ENCODE measurements at regions of chr10 and their contacts with region 1.

Region 1: DNA sequence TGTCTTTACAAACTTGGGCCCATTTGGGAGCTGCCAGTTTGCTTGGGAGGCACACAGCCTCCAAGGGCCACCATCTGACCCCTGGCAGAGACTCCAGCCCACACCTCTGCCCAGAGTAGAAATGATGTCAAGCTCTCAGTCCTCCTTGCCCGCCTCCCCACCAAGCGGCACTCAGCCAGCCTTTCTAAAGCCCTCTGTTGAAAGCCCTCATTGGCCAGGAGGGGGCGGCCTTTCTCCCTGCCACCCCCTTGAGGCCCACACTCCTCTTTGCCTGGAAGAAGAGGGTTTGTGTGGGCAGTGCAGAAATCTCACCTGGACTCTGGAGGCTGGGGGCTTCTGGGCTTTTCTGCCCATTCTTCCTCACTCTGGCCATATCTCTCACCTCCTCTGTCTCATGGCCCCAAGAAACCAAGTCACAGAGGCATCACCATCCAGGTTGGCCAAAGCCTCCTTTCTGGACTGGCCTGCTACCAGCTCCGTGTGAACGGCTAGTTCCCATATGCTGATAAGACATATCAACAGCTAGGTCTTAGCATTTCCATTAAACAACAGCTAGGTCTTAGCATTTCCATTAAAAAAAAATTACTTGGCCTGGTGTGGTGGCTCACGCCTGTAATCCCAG is 36.1 kb downstream of the UBTD1 start:
- DNase-seq: peak; percentile 46
- ATAC-seq: peak; percentile 65
- H3K4me3 Mint-ChIP-seq: no peak overlapping the region
- H3K27ac Mint-ChIP-seq: no peak overlapping the region
- H3K4me1 Mint-ChIP-seq: no peaks in the 10 kb centered on the region
- H3K27me3 Mint-ChIP-seq: no peaks in the 10 kb centered on the region

Region 2: DNA sequence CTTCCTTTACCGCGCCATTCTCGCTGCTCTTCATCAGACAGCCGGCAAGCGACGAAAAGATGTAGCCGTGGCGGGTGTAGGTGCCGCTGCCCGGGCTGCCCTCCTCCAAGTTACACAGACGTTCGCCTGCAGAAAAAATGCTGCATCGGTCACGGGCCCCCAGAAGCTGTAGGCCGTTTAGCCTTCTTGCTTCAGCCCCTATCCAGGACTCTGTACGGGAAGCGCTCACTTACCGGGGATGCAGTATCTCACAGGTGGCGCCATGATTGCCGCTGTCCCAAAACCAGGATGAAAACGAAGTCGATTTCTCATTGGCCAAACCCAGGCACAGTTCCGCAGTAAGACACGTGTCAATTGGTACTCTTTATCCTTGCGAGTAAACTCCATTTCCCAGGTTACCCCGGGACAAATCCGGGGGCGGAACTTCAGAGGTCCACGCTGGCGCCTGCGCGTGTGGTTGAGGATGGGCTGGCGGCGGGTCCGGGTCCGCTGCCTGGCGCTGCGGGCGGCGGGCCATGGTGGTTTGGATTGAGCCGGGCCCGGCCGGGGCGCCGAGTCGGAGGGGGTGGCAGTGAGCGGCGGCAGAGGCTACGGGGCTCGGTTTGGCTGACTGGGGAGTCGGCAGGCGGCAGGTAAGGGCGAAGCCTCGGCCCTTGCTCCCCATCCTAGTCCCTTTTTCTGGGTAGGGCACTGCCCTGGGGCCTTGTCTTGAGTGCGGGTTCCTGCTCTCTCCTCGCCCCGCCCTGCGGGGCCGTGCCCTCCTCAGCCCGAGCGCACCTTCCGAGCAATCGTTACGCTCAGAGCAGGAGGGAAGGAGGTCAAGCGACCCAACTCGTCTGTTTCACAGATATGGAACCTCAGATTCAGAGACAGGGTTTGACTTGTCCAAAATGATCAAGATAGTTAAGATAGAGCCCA is 88.9 kb before region 1 on chr10 and contains the starts of genes EXOSC1 and ZDHHC16:
- CTCF ChIA-PET with region 1: no interaction called
- POLR2A ChIA-PET with region 1: no interaction called
- DNase-seq: peak; percentile 94
- ATAC-seq: peak; percentile 98
- H3K4me3 Mint-ChIP-seq: peak within 1 kb of the TSS; percentile 98
- H3K27ac Mint-ChIP-seq: peak within 1 kb of the TSS; percentile 92
- H3K4me1 Mint-ChIP-seq: peaks cover 40% of the 10 kb centered on the region
- H3K27me3 Mint-ChIP-seq: no peaks in the 10 kb centered on the region
- total RNA-seq, gene EXOSC1: 47.1 to 48.2 TPM
- total RNA-seq, gene ZDHHC16: 35.8 to 36.2 TPM

Region 3: DNA sequence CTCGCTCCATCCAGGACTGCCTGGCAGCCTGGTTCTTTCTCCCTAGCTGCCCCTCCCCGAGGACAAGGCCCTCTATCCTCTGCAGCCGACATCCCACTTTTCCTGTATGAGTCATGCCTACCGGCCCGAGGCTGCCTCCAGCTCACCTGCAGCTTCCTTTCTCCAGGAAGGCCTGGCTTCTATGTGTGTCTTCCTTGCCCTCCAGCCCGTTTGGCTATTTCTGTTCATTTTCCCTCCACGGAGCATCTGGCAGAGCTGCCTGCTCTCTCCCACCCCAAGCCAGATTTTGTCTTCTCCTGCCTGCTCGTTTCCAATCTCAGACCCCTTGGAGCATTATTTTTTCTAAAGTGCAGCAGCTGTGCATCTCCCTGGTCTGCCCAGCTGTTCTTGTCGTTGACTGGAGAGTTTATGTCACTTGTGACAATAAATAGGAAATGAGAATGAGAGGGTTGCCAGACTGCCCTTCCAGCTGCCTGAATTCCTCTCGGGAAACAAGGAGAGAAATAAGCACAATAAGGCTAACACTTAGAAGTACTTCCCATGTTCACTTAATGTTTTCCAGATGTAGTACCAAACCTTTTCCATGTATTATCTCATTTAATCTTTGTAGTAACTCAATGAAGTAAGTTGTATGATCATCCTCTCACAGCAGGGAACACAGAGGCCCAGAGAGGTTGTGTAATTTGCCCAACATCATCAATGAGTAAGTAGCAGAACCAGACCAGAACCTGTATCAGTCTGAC is 16.4 kb before region 1 on chr10:
- CTCF ChIA-PET with region 1: interaction called, 17 read pairs
- POLR2A ChIA-PET with region 1: no interaction called
- DNase-seq: no peak
- ATAC-seq: no peak
- H3K4me3 Mint-ChIP-seq: no peak overlapping the region
- H3K27ac Mint-ChIP-seq: no peak overlapping the region
- H3K4me1 Mint-ChIP-seq: no peaks in the 10 kb centered on the region
- H3K27me3 Mint-ChIP-seq: peaks cover 19% of the 10 kb centered on the region

Region 4: GRCh38 chr10:97546456-97547270 is 11.8 kb after region 1 on chr10:
- CTCF ChIA-PET with region 1: interaction called, 12 read pairs
- POLR2A ChIA-PET with region 1: interaction called, 4 read pairs
- DNase-seq: no peak
- ATAC-seq: no peak
- H3K4me3 Mint-ChIP-seq: no peak overlapping the region
- H3K27ac Mint-ChIP-seq: no peak overlapping the region
- H3K4me1 Mint-ChIP-seq: peaks cover 13% of the 10 kb centered on the region
- H3K27me3 Mint-ChIP-seq: no peaks in the 10 kb centered on the region

Measured in activated CD8-positive, alpha-beta T cell treated with anti-CD3 and anti-CD28 coated beads, Interleukin-2, amount 10 ng/mL, durations not matched to agents 7 days and 5 days (primary cell).